ENCODE measurements at regions of chr1 and their contacts with region 1.

Region 1: GRCh38 chr1:77271852-77272580 is 9.8 kb upstream of the AK5 start:
- DNase-seq: no peak
- H3K4me3 ChIP-seq: no peak overlapping the region
- H3K27ac ChIP-seq: no peak overlapping the region
- H3K4me1 ChIP-seq: no peaks in the 10 kb centered on the region
- H3K27me3 ChIP-seq: peaks cover 4% of the 10 kb centered on the region
- CTCF ChIP-seq: no peak
- POLR2A ChIP-seq: no peak

Region 2: GRCh38 chr1:77333501-77333900 is 61.5 kb after region 1 on chr1:
- intact Hi-C with region 1: loop called in 1 of 2 experiments (anchors 10 kb)
- DNase-seq: no peak
- H3K4me3 ChIP-seq: no peak overlapping the region
- H3K27ac ChIP-seq: no peak overlapping the region
- H3K4me1 ChIP-seq: no peaks in the 10 kb centered on the region
- H3K27me3 ChIP-seq: no peaks in the 10 kb centered on the region
- CTCF ChIP-seq: no peak
- POLR2A ChIP-seq: no peak

Region 3: GRCh38 chr1:77378723-77379535 is 106.9 kb after region 1 on chr1:
- intact Hi-C with region 1: no loop called
- DNase-seq: no peak
- H3K4me3 ChIP-seq: no peak overlapping the region
- H3K27ac ChIP-seq: no peak overlapping the region
- H3K4me1 ChIP-seq: no peaks in the 10 kb centered on the region
- H3K27me3 ChIP-seq: no peaks in the 10 kb centered on the region
- CTCF ChIP-seq: no peak
- POLR2A ChIP-seq: no peak

Measured in adrenal gland (tissue), 19 donors.